Mammary epithelial cell (primary cell): ENCODE measurements at regions of chr17 and their contacts with region 1.

Region 1: DNA sequence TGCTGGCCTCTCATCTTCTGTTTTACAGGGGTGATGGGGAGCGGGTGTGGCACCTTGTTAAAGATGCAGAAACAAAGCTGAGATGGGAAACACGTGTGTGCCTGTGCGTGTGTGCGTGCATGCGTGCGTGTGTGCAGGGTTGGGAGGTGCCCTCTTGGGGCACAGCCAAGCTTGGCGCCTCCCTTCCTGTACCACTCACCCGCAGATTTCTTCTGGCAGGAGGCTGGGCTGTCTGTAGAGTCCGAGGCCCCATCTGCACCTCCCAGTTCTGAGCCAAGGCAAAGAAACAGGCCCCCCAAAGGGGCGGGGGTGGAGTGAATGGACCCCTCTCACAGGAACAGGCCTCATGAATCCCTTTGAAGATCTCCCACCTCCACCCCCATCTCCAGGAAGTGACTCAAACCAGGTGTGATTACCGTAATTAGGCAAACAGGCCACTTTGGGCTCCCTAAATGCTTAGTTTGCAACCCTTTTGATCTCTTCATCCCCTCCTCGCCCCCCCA is 20.9 kb downstream of the TNS4 start:
- DNase-seq: peak; percentile 63
- H3K4me3 ChIP-seq: no peak overlapping the region
- H3K27ac ChIP-seq: peak overlapping the region; percentile 4
- H3K4me1 ChIP-seq: peaks cover 37% of the 10 kb centered on the region
- H3K27me3 ChIP-seq: no peaks in the 10 kb centered on the region
- CTCF ChIP-seq: no peak

Region 2: GRCh38 chr17:40443583-40444327 is 36.8 kb before region 1 on chr17:
- CTCF ChIA-PET with region 1: interaction called, 5 read pairs
- dilution Hi-C with region 1: loop called (anchors 5 kb)
- in situ Hi-C with region 1: no loop called
- intact Hi-C with region 1: loop called (anchors 1 kb)
- DNase-seq: peak; percentile 55
- H3K4me3 ChIP-seq: peak overlapping the region; percentile 25 to 60 (median 45)
- H3K27ac ChIP-seq: peak overlapping the region; percentile 0
- H3K4me1 ChIP-seq: peaks cover 34% of the 10 kb centered on the region
- H3K27me3 ChIP-seq: no peaks in the 10 kb centered on the region
- CTCF ChIP-seq: peak; percentile 41 to 68

Region 3: DNA sequence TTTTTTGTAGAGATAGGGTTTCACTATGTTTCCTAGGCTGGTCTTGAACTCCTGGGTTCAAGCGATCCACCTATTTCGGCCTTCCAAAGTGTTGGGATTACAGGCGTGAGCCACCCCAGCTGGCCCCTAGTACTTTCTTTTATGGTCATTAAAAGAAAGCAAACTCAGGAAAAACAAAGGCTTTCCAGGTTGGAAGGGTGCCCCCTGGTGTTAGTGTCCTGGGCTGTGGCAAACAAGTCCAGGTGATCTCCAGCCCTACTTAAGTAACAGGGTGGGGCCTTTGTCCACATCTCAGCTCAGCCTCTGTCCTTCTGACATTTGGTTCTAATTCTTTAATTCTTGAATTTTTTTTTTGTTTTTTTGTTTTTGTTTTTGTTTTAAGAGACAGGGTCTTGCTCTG is 30.4 kb before region 1 on chr17:
- CTCF ChIA-PET with region 1: no interaction called
- dilution Hi-C with region 1: loop called (anchors 5 kb)
- in situ Hi-C with region 1: no loop called
- intact Hi-C with region 1: no loop called
- DNase-seq: peak; percentile 39
- H3K4me3 ChIP-seq: no peak overlapping the region
- H3K27ac ChIP-seq: no peak overlapping the region
- H3K4me1 ChIP-seq: peaks cover 16% of the 10 kb centered on the region
- H3K27me3 ChIP-seq: no peaks in the 10 kb centered on the region
- CTCF ChIP-seq: peak; percentile 62 to 67